Colonic mucosa (tissue), 4 donors: ENCODE measurements at regions of chr17 and their contacts with region 1.

Region 1: DNA sequence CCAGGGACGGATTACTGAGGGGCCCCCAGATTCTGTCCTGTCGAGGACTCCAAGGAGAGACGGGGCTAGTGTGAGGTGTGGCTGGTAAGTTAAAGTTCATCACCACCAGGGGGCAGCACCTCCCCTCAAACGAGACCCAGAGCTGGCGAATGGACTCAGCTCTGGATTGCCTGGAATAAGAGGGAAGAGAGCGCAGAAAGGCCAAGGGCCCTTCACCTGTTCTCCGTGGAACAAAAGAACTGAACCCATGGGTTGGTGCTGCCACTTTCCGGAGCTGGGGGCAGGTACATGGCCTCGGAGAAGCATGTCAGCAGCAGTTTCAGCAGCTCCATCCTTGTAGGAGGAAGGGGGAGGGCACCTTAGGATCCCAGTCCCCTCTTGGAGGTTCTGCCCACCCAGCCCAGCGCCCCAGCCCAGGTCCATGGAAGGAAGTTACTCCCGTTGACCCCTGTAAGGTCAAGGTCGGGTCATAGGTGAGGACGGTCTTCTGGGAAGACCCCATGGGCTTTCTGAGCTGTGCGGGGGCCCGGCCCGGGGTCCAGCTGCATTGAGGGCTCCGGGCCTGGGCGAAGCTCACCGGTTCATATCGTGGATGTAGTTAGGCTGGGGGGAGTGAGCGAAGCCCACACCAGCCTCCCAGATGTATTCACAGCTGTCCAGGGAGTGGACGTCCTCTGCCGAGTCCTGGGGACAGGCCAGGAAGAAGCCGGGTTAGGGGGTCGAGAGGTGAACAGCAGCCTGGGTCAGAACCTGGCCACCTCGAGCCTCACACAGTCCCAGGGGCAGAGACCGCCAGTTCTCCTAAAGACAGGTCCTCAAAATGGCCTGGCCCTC is 10.7 kb downstream of the HID1 start:
- DNase-seq: peak; percentile 95
- H3K4me3 ChIP-seq: no peak overlapping the region
- H3K27ac ChIP-seq: no peak overlapping the region
- H3K4me1 ChIP-seq: no peaks in the 10 kb centered on the region
- H3K27me3 ChIP-seq: no peaks in the 10 kb centered on the region
- CTCF ChIP-seq: peak; percentile 81

Region 2: GRCh38 chr17:74790161-74791054 is 171.5 kb before region 1 on chr17:
- intact Hi-C with region 1: loop called (anchors 5 kb)
- DNase-seq: no peak
- H3K4me3 ChIP-seq: no peak overlapping the region
- H3K27ac ChIP-seq: no peak overlapping the region
- H3K4me1 ChIP-seq: no peaks in the 10 kb centered on the region
- H3K27me3 ChIP-seq: no peaks in the 10 kb centered on the region
- CTCF ChIP-seq: no peak

Region 3: DNA sequence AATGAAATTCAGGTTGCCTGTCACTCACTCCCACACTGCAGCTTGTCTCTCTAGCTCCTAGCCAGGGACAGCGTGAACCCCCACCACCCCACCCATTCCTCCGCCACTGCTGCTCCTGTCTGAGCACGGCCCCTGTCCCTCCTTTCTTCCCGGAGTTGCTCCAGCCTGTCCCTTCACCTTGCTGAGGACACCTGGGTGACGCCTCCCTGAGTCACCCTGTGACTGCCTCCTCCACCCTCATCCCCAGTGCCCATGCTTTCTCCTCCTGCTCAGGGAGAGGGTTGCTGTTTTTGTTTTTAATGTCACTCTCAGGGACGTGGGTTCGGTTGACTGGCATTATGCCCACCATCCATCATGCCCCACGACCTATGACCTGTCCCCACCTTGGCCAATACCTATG is 160.0 kb before region 1 on chr17:
- intact Hi-C with region 1: no loop called
- DNase-seq: no peak
- H3K4me3 ChIP-seq: no peak overlapping the region
- H3K27ac ChIP-seq: no peak overlapping the region
- H3K4me1 ChIP-seq: no peaks in the 10 kb centered on the region
- H3K27me3 ChIP-seq: no peaks in the 10 kb centered on the region
- CTCF ChIP-seq: no peak

Region 4: DNA sequence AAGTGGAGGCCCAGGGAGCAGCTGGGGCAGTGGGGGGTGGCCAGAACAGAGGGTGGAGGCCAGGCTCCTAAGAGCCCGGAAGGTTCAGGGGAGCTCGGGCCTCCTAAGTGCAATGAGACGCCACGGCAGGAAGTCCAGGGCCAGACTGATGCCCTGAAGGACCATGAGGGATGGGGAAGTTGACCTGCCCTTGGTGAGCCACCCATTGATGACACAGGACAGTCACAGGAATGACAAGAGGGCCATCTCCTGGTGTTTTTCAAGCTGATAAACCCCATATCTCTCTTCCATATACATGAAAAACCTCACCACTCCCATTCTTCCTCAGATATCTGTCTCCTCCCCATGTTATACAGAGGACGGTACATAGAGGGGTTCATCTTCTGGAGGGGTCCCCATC is 44.8 kb after region 1 on chr17:
- intact Hi-C with region 1: loop called (anchors 5 kb)
- DNase-seq: no peak
- H3K4me3 ChIP-seq: no peak overlapping the region
- H3K27ac ChIP-seq: no peak overlapping the region
- H3K4me1 ChIP-seq: peaks cover 3% of the 10 kb centered on the region
- H3K27me3 ChIP-seq: no peaks in the 10 kb centered on the region
- CTCF ChIP-seq: no peak

Region 5: DNA sequence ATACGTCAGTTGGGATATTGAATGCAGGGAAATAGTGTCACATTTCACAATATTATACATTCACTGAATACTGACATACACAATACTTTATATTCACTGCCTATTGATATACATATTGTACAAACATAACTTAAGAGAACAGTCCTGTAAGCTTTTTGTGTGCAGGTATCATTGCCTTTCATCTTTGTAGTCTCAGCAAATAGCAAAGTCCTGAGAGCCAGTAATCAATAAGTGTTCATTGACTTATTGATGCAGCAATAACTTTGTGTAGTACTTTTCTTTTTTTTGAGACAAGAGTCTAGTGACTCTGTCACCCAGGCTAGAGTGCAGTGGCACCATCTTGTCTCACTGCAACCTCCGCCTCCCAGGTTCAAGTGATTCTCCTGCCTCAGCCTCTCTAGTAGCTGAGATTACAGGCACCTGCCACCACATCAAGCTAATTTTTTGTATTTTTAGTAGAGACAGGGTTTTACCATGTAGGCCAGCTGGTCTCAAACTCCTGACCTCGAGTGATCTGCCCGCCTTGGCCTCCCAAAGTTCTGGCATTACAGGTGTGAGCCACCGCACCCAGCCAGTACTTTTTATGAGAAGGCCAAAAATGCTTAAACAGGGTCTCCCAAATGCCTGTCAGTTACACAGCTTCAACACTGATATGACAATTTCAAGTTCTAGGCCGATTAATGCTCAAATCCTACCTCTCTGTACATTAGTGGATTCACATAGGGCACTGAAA is 238.2 kb after region 1 on chr17:
- intact Hi-C with region 1: loop called (anchors 5 kb)
- DNase-seq: no peak
- H3K4me3 ChIP-seq: no peak overlapping the region
- H3K27ac ChIP-seq: no peak overlapping the region
- H3K4me1 ChIP-seq: no peaks in the 10 kb centered on the region
- H3K27me3 ChIP-seq: no peaks in the 10 kb centered on the region
- CTCF ChIP-seq: no peak